Posterior cingulate gyrus (tissue), 11 donors: ENCODE measurements at regions of chr17 and their contacts with region 1.

Region 1: DNA sequence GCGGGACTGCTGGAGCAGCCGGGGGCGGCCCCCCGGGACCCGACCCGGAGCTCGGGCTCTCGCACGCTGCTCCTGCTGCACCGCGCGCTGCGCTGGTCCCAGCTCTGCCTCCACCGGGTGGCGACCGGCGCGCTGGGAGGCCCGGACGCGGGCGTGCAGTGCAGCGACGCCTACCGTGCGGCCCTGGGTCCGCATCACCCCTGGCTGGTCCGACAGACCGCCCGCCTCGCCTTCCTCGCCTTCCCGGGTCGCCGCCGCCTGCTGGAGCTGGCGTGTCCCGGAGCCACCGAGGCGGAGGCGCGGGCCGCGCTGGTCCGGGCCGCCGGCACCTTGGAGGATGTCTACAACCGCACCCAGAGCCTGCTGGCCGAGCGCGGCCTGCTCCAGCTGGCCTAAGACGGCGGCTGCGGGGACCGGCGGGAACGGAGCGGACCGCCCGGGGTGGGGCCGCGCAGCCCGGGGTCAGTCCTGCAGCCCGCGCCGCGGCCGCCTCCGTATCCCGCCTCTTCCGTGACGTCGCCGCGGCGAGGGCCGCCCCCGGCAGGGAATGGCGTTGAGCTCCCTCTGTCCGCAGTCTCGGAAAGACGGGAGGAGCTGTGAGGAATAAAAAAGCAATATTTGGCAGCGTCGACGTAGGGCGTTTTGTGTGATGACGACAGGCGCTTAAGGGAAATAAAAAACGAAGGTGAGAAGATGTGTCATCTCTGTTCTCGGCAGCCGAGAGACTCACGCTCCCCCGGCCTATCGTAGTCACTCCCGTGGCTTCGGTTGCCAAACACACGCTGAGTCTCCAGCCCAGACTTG is 1.3 kb downstream of the GLTPD2 start:
- DNase-seq: peak; percentile 72 to 97 (median 86)

Region 2: GRCh38 chr17:3927628-3928340 is 862.3 kb before region 1 on chr17:
- intact Hi-C with region 1: no loop called
- DNase-seq: no peak

Region 3: DNA sequence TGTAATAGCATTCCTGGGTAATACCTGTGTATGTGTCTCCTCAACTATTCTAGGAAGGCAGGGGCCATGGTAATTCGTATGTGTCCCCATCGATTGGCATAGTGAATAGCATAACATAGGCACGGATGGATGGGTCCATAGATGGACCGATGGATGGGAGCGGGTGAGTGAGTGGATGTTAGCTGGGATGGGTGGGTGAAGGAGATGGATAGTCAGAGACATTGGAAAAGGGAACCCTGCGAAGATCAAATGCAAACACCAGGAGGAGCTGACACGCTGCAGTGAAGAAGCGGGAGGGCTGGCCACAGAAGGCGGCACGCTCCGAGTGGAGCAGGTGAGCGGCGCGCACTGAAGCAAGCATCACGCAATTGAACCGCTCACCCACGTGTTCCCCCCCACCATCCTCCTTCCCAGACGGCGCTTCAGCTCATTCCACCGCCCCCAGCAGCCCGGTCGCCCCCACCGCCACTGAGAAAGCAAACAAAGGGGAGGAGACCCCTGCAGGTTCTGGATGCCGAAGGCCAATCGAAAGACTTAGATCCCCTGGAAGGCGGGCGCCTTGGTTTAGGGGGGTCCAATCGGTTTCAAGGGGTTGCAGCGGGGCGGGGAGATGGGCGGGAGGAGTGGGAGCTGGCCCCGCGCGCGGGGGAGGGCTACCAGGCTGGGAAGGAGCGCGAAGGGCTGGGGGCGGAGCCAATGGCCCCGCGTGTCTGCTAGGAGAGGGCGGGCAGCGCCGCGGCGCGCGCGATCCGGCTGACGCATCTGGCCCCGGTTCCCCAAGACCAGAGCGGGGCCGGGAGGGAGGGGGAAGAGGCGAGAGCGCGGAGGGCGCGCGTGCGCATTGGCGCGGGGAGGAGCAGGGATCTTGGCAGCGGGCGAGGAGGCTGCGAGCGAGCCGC is 80.1 kb before region 1 on chr17 and contains the start of gene ARRB2:
- intact Hi-C with region 1: loop called (anchors 5 kb)
- DNase-seq: peak; percentile 95 to 100 (median 99)

Region 4: DNA sequence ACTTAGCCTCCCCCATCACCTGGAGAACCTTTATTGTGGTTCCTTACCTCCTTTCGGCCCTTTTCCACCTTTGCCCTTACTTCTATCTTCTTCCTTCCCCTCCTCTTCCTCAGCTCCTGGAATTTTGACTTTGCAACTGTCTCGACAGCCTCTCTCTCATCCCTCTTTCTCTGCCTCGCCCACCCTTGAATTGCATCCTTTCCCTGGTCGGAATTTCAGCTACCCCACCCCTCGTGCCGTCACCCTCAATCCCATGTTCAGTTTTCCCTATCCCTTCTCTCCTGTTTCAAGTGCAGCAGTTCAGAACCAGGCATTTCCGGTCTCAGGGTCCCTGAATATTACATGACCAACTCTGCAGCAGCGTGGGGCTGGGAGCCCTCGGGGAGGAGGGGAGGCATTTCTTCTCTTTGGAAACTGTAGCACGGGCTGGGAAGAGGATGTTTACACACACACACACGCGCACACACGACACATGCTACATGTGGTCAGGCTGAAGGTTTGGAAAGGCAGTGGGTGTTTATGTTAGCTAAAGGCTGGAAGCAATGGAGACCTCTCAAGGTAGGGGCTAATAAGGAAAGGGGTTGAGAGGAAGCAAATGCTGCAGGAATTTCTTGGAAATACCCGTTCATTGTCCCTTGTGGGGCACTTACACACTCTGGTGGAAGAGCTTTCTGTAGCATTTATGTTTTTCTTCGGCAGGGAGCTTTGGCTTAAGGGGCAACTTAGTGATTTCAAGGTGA is 44.0 kb after region 1 on chr17:
- intact Hi-C with region 1: loop called (anchors 5 kb)
- DNase-seq: peak in 3 of 10 donors; percentile 30 to 80 (median 75)

Region 5: GRCh38 chr17:4891411-4892342 is 101.6 kb after region 1 on chr17:
- intact Hi-C with region 1: loop called (anchors 1 kb)
- DNase-seq: peak in 2 of 10 donors; percentile 59 to 80

Region 6: GRCh38 chr17:4903051-4903818 is 113.1 kb after region 1 on chr17 and contains the start of gene CHRNE:
- intact Hi-C with region 1: loop called (anchors 5 kb)
- DNase-seq: peak in 8 of 10 donors; percentile 36 to 87 (median 78)

Region 7: GRCh38 chr17:4934173-4934979 is 144.3 kb after region 1 on chr17:
- intact Hi-C with region 1: no loop called
- DNase-seq: peak in 3 of 10 donors; percentile 51 to 81 (median 58)